Gastrocnemius medialis (tissue), 4 donors: ENCODE measurements at regions of chrX and their contacts with region 1.

Region 1: DNA sequence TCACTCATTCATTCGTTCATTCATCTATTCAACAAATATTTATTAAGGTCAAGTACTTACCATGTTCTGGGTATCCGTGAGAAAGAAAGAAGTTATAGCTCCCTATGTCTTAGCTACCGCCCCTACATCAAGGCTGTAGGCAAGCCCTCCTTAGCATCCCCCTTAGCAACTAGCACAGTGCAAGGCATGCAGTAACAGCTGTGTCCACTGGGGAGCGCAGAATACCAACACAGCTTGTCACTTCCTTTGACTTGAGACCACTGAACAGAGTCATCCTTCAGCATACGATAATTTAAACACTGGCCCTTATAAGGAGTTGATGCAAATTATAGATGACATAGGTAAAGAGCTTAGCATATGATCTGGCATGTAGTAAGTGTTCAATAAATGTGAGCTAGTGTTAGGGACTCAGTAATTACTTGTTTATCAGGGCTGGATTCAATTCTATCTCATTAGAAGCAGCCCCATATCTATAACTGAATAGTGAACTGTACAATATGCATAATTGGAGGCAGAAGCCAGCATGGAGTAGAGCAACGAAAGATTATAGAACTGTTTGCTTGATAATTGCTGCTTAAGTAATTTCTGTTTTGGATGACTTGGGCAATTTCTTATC is 8.7 kb downstream of the KIAA1210 start:
- DNase-seq: peak in 1 of 2 donors; percentile 13
- ATAC-seq: no peak
- H3K4me3 ChIP-seq: no peak overlapping the region
- H3K27ac ChIP-seq: no peak overlapping the region
- H3K4me1 ChIP-seq: no peaks in the 10 kb centered on the region
- H3K27me3 ChIP-seq: no peaks in the 10 kb centered on the region
- CTCF ChIP-seq: peak in 4 of 5 experiments; percentile 40 to 65 (median 45)
- POLR2A ChIP-seq: no peak

Region 2: DNA sequence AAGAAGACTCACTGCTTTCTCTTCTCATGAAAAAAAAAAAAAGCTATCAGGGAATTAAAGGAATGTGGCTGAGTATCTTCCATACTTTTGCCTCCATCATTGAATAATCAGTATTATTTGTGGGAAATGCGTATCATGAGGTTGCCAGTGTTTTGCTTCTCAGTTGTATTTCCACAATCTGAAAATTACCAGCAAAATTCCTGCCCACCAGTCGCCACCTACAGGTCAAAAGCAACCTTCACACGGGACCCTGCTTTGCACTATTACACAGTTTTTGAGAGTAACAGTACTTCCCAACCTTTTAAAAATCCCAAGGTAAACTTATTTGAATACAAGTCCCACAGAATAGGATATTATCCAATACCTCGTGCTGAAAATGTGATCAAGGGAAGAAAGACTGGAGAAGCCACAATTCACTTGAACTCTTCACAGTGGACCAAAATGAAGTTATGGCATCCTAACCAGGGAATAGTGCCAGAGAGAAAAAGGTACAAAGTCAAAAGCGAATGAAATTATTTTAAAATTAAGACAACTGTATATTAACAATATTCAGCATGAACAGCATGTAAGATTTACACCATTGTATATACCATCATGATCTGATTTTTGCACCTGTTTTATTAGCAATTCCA is 147.6 kb after region 1 on chrX:
- in situ Hi-C with region 1: no loop called
- intact Hi-C with region 1: loop called (anchors 10 kb)
- DNase-seq: no peak
- ATAC-seq: no peak
- H3K4me3 ChIP-seq: no peak overlapping the region
- H3K27ac ChIP-seq: no peak overlapping the region
- H3K4me1 ChIP-seq: no peaks in the 10 kb centered on the region
- H3K27me3 ChIP-seq: no peaks in the 10 kb centered on the region
- CTCF ChIP-seq: peak in 4 of 5 experiments; percentile 14 to 58 (median 31)
- POLR2A ChIP-seq: no peak